Activated CD4-positive, alpha-beta memory T cell treated with anti-CD3 and anti-CD28 coated beads for 36 hours (primary cell): ENCODE measurements at regions of chr6 and their contacts with region 1.

Region 1: DNA sequence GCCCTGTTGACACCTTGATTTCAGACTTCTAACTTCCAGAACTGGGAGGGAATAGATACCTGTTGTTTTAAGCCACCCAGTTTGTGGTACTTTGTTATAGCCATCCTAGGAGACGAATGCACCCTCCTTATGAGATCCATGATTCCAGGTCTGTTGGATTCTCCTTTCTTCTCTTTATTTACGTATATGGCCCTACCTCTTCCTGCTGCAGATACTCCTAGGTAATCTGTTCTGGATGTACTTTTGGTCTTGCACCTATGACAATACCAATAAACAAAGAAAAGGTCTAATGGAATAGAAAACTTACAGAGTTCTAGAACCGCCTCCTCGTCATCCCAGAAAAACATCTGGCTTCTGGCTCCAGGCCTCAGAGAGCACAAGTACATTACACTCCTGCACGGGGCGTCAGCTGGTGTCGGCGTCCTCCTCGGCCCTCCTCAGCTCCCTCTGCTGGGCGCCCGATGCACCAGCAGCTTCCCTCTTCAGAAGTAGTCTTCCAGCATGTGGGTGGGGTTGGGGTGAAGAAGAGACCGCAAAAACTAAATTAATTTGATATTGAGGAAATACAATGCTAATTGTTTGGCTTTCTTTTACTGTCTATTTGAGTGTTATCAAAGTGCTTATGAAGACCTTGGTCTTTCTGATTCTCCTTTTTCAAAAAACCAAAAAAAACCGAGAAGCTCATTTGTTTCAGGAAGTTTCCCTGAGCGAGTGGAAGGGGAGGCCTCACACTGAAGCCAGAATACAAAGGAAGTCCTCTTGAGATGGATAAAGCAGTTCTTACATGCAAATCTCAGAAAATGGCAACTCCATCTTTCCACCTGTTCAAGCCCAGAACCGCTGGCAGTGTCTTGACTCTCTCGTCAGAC is 9.7 kb upstream of the ATXN1 start:
- DNase-seq: peak; percentile 86
- H3K4me3 Mint-ChIP-seq: peak overlapping the region; percentile 42
- H3K27ac Mint-ChIP-seq: no peak overlapping the region
- H3K4me1 Mint-ChIP-seq: peaks cover 50% of the 10 kb centered on the region
- H3K27me3 Mint-ChIP-seq: no peaks in the 10 kb centered on the region

Region 2: DNA sequence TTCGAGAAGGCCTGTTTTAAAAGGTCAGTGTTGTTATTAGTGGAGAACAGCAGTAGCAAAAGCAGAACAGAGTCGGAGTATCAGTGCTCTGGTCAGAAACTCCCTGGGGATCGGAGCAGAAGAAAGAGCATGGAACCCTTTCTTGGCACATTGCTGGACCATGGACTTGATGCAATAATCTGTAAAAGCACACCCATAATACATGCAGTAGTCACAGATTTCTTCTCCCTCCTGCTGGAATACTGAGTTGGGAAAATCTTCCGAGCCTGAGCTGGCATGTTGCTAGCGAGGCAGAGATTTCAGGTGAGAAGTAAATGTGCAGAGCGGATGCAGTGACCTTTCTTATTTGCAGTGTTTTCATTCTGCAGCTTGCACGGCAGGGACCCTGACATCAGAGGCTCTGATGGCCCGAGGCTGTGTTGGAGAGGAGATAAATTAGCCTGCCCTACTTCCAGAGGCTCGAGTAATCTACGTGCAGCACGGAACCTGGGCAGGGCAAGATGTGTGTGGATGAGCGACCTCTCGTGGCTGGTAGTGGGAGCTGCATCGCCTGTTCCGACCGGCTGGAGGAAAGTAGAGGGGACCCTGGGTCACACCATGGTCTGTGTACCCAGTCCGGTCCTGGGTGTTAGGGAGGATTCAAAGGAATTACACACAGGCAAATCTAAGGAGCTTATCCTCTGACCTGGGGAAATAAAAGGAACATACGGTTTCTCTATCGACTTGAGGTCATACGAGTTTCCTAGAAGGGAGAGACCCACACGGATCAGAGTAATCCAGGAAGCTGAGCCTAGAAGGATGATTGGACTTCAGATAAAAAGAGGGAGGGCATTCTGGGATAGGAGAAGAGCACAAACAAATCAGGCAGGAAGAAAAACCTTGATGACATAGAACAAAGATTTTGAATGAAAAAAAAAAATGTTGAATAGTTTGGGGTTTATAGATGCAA is 193.9 kb after region 1 on chr6:
- CTCF ChIA-PET with region 1: interaction called, 22 read pairs
- POLR2A ChIA-PET with region 1: no interaction called
- intact Hi-C with region 1: no loop called
- DNase-seq: peak; percentile 83
- H3K4me3 Mint-ChIP-seq: no peak overlapping the region
- H3K27ac Mint-ChIP-seq: no peak overlapping the region
- H3K4me1 Mint-ChIP-seq: peaks cover 14% of the 10 kb centered on the region
- H3K27me3 Mint-ChIP-seq: peaks cover 15% of the 10 kb centered on the region